CD4-positive, alpha-beta memory T cell (primary cell): ENCODE measurements at regions of chr1 and their contacts with region 1.

Region 1: GRCh38 chr1:43974443-43975248 is at the start of gene ATP6V0B:
- DNase-seq: peak; percentile 86 to 93 (median 89)
- H3K4me3 ChIP-seq: peak within 1 kb of the TSS; percentile 90 to 96
- H3K4me3 Mint-ChIP-seq: peak within 1 kb of the TSS; percentile 91 to 98 (median 93)
- H3K27ac ChIP-seq: peak within 1 kb of the TSS; percentile 83
- H3K27ac Mint-ChIP-seq: peak within 1 kb of the TSS; percentile 95 to 98 (median 96)
- H3K4me1 ChIP-seq: peaks cover 52% of the 10 kb centered on the region
- H3K4me1 Mint-ChIP-seq: peaks cover 42 to 73% (median 58%) of the 10 kb centered on the region in 4 donors
- H3K27me3 ChIP-seq: no peaks in the 10 kb centered on the region
- H3K27me3 Mint-ChIP-seq: no peaks in the 10 kb centered on the region
- total RNA-seq, gene ATP6V0B: 59.8 to 73.9 TPM

Region 2: GRCh38 chr1:43991476-43992231 is 17.0 kb after region 1 on chr1 and contains the start of gene CCDC24:
- CTCF ChIA-PET with region 1: interaction called, 8 read pairs
- POLR2A ChIA-PET with region 1: interaction called, 15 read pairs
- intact Hi-C with region 1: loop called (anchors 1 kb)
- DNase-seq: peak; percentile 62 to 81 (median 69)
- H3K4me3 ChIP-seq: peak within 1 kb of the TSS; percentile 46 to 74
- H3K4me3 Mint-ChIP-seq: peak within 1 kb of the TSS; percentile 92 to 98 (median 94)
- H3K27ac ChIP-seq: peak within 1 kb of the TSS; percentile 70
- H3K27ac Mint-ChIP-seq: peak within 1 kb of the TSS; percentile 71 to 95 (median 93)
- H3K4me1 ChIP-seq: peaks cover 14% of the 10 kb centered on the region
- H3K4me1 Mint-ChIP-seq: peaks cover 5 to 21% (median 14%) of the 10 kb centered on the region in 4 donors
- H3K27me3 ChIP-seq: no peaks in the 10 kb centered on the region
- H3K27me3 Mint-ChIP-seq: no peaks in the 10 kb centered on the region
- total RNA-seq, gene CCDC24: 1.5 to 1.9 TPM

Region 3: GRCh38 chr1:44029906-44030604 is 55.4 kb after region 1 on chr1:
- CTCF ChIA-PET with region 1: no interaction called
- POLR2A ChIA-PET with region 1: interaction called, 6 read pairs
- intact Hi-C with region 1: loop called (anchors 1 kb)
- DNase-seq: peak; percentile 84 to 89 (median 86)
- H3K4me3 ChIP-seq: peak overlapping the region; percentile 66 to 69
- H3K4me3 Mint-ChIP-seq: peak overlapping the region; percentile 89 to 98 (median 96)
- H3K27ac ChIP-seq: peak overlapping the region; percentile 64
- H3K27ac Mint-ChIP-seq: peak overlapping the region; percentile 95 to 97 (median 96)
- H3K4me1 ChIP-seq: peaks cover 18% of the 10 kb centered on the region
- H3K4me1 Mint-ChIP-seq: peaks cover 17 to 39% (median 26%) of the 10 kb centered on the region in 4 donors
- H3K27me3 ChIP-seq: no peaks in the 10 kb centered on the region
- H3K27me3 Mint-ChIP-seq: no peaks in the 10 kb centered on the region